AG04450 (cell line): ENCODE measurements at regions of chr17 and their contacts with region 1.

Region 1: GRCh38 chr17:48816774-48817590 is at the start of gene TTLL6:
- DNase-seq: peak; percentile 18
- H3K4me3 ChIP-seq: peak within 1 kb of the TSS; percentile 50
- H3K27ac ChIP-seq: peak within 1 kb of the TSS; percentile 39
- H3K27me3 ChIP-seq: peaks cover 33% of the 10 kb centered on the region
- CTCF ChIP-seq: no peak
- polyA plus RNA-seq, gene TTLL6: 0.04 and 0.06 TPM in 2 replicates

Region 2: DNA sequence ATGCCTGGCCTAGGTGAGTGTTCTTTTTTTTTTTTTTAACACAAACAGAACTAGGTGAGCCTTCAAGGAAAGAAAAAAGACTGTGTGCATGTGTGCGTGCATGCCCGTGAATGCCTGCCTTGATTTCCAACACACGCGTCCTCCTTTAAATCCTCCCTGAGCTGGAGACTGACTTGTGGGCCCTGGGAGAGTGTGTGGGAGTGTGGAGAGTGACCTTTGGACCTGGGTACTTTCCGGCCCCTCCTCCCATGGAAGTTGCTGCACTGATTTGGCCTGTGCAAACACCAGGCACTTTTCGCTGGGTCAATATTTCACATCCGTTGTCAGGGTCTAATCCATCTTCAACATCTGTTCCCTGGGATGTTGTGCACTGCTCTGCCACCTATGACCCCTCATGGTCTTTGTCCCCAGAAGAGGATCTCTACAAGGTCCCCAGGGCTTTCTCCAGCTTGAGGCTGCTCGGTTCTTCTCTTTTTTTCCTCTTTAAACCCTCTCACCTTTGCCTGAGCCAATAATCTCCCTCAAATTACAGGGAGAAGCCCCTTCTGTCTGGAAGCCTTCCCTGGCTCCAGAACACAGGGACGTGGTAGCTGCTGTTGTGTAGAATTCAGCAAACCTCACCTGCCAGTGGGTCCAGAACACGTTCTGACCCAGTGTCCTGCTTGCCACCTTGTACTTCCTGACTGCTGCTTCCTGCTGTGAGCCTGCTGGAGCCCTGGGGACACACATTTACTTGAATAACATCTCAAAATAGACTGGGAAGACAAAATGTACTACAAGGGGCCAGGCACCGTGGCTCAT is 54.8 kb after region 1 on chr17:
- CTCF ChIA-PET with region 1: interaction called, 164 read pairs
- POLR2A ChIA-PET with region 1: no interaction called
- DNase-seq: no peak
- H3K4me3 ChIP-seq: no peak overlapping the region
- H3K27ac ChIP-seq: no peak overlapping the region
- H3K27me3 ChIP-seq: peaks cover 9% of the 10 kb centered on the region
- CTCF ChIP-seq: no peak

Region 3: GRCh38 chr17:48970224-48970623 is 153.2 kb after region 1 on chr17:
- CTCF ChIA-PET with region 1: no interaction called
- POLR2A ChIA-PET with region 1: no interaction called
- DNase-seq: no peak
- H3K4me3 ChIP-seq: no peak overlapping the region
- H3K27ac ChIP-seq: no peak overlapping the region
- H3K27me3 ChIP-seq: no peaks in the 10 kb centered on the region
- CTCF ChIP-seq: no peak